Dorsolateral prefrontal cortex (tissue), 120 donors: ENCODE measurements at regions of chr16 and their contacts with region 1.

Region 1: DNA sequence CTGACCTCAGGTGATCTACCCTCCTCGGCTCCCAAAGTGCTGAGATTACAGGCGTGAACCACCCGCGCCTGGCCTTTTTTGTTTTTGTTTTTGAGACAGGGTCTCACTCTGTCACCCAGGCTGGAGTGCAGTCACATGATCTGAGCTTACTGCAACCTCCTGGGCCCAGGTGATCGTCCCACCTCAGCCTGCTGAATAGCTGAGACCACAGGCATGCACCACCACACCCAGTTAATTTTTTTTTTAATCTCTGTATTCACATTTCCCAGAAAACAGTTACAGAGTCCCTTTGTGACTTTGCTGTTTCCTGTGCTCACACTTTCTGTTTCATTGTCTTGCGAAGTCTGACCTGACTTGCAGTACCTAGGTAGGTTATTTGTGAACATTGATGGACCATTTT is 2.7 kb downstream of the CLUAP1 start:
- DNase-seq: peak in 1 of 10 donors; percentile 12
- H3K4me3 ChIP-seq: no peak overlapping the region
- H3K27ac ChIP-seq: no peak overlapping the region
- H3K27me3 ChIP-seq: no peaks in the 10 kb centered on the region
- CTCF ChIP-seq: no peak

Region 2: DNA sequence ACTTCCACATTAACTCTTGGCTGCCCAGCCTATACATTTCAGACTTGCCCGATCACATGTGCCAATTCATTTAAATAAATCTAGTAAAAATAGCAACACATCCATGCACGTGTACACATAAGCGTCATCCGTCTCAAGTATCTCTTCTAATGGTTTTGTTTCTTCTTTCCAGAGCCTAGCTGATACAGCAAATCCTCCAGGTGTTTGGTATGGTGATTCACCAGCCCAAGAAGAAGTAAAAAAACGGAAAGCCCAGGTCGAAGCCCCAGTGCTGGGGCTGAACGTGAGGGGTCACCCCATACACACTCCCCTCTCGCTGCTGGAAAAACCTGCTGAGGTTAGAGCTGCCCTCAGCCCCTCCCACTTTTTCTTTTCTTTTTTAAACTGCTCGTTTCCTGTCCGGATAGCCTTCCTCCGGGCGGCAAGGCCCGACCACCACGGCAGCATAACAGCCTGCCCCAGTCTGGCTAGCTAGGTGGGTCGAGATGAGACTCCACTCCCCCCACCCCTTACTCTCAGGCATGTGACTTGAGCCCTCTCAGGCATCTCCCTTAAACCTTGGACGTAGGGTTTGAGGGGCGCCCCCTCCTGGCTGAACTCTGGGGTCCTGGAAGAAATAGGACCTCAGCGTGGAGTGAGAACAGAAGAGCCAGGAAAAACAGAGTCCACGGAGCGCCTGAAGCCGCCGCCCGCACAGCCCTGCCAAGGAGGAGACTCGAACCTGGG is 329.5 kb before region 1 on chr16:
- intact Hi-C with region 1: no loop called
- DNase-seq: no peak
- H3K4me3 ChIP-seq: no peak overlapping the region
- H3K27ac ChIP-seq: no peak overlapping the region
- H3K27me3 ChIP-seq: peaks cover 11 to 100% (median 94%) of the 10 kb centered on the region in 45 donors
- CTCF ChIP-seq: peak in 1 of 56 donors; percentile 5

Region 3: GRCh38 chr16:3457434-3458252 is 45.9 kb before region 1 on chr16:
- intact Hi-C with region 1: loop called (anchors 1 to 5 kb)
- DNase-seq: peak; percentile 83 to 94 (median 90)
- H3K4me3 ChIP-seq: peak overlapping the region; percentile 62 to 97 (median 88)
- H3K27ac ChIP-seq: peak overlapping the region; percentile 84 to 100 (median 99)
- H3K27me3 ChIP-seq: no peaks in the 10 kb centered on the region
- CTCF ChIP-seq: peak in 53 of 56 donors; percentile 23 to 77 (median 48)

Region 4: GRCh38 chr16:3471518-3472176 is 31.9 kb before region 1 on chr16:
- intact Hi-C with region 1: no loop called
- DNase-seq: peak in 1 of 10 donors; percentile 57
- H3K4me3 ChIP-seq: no peak overlapping the region
- H3K27ac ChIP-seq: peak overlapping the region in 2 of 59 donors; percentile 14 to 43
- H3K27me3 ChIP-seq: no peaks in the 10 kb centered on the region
- CTCF ChIP-seq: no peak

Region 5: GRCh38 chr16:3485821-3486505 is 17.6 kb before region 1 on chr16:
- intact Hi-C with region 1: no loop called
- DNase-seq: no peak
- H3K4me3 ChIP-seq: no peak overlapping the region
- H3K27ac ChIP-seq: peak overlapping the region in 4 of 59 donors; percentile 7 to 45 (median 27)
- H3K27me3 ChIP-seq: no peaks in the 10 kb centered on the region
- CTCF ChIP-seq: no peak